Activated CD8-positive, alpha-beta T cell treated with anti-CD3 and anti-CD28 coated beads for 36 hours (primary cell): ENCODE measurements at regions of chr7 and their contacts with region 1.

Region 1: DNA sequence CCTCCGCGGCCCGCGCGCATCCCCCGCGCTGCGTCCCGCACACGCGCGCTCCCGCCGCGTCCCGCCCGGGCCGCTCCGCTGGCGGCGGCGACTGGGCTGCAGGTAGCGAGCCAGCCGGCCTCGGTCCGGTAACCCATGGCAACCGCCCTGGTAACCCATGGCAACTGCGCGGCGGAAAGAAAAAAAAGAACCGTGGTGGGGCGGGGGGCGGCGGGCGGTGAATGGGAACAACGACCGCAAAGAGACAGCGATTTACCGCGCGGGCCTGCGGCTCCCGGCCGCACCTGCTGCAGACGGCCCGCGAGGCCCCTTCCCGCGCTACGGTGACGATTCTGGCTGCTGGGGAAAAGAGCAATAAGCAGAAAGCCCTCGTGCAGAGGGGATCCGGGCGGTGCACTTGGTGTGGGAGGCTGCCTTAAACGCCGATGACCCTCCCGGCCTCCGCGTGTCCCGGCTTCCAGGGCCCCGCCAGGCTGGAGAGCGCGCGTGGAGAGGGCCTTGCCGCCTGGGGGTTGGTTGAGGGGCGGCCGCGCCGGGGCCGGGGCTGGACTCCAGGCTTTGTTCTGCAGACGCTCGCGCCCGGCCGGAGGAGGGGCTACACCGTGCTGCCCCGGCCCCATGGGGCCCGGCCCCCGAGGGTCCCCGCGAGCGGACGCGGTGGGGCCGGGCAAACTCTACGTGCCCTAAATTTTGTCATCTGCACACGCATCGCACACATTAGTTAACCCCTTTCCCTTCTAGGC is 84.7 kb downstream of the SNX10 start:
- DNase-seq: peak; percentile 65
- ATAC-seq: peak; percentile 8
- H3K4me3 Mint-ChIP-seq: peak overlapping the region; percentile 71
- H3K27ac Mint-ChIP-seq: no peak overlapping the region
- H3K4me1 Mint-ChIP-seq: peaks cover 6% of the 10 kb centered on the region
- H3K27me3 Mint-ChIP-seq: peaks cover 19% of the 10 kb centered on the region
- CTCF ChIP-seq: no peak

Region 2: DNA sequence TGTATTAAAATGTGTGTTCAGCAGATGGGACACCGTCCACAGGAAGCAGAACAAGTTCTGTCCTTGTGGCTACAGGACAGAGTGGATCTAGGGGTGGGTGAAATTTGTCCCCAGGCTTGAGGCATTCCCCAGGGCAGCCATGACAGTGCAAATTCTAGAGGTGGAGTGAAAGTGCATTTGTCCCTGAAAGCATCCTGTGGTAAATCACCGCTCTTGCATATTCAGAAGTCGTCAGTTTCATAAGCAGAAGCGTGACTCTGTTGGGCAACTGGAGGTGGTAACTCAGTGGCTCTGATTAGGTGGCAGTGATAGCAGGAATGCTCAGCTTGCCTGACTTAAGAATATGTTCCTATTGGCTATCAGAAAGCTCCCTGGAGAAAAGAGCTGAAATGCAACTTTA is 11.9 kb after region 1 on chr7:
- CTCF ChIA-PET with region 1: interaction called, 12 read pairs
- POLR2A ChIA-PET with region 1: interaction called, 3 read pairs
- intact Hi-C with region 1: no loop called
- DNase-seq: no peak
- ATAC-seq: peak; percentile 34
- H3K4me3 Mint-ChIP-seq: no peak overlapping the region
- H3K27ac Mint-ChIP-seq: no peak overlapping the region
- H3K4me1 Mint-ChIP-seq: no peaks in the 10 kb centered on the region
- H3K27me3 Mint-ChIP-seq: peaks cover 36% of the 10 kb centered on the region
- CTCF ChIP-seq: no peak

Region 3: DNA sequence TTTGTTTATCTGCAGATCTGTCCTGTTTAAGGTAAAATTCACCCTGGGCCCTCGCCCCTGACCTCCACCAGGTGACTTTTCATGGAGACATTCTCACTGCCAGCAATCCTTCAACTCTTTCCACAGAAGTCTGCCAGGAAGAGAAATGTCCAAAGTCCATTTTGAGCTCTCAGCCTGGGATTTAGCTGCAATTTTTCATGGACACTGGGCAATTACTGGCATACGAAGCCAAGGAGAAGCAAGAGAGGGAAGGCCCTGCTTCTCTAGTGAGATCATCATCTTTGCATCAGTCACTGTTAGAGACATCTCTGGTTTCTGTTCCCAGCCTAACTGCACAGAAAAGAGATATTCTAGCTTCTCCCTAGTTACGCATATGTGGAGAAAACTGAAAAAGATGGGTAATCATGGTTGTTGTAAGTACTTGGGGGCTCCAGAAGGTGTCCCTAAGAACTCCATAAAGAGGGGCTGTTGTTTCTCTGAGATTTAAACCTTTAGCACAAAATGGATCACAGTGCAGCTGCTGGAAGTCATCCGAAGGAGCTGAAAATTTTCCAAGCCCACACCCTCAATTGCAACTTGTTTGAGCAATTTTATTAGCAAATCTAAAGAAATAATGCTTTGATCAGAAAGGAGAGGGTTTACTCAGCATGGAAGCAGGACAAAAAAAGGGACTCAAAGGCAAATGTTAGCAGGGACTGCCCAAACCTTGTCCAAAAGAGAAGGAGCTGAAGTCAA is 84.2 kb after region 1 on chr7:
- CTCF ChIA-PET with region 1: no interaction called
- POLR2A ChIA-PET with region 1: no interaction called
- intact Hi-C with region 1: no loop called
- DNase-seq: no peak
- ATAC-seq: no peak
- H3K4me3 Mint-ChIP-seq: no peak overlapping the region
- H3K27ac Mint-ChIP-seq: no peak overlapping the region
- H3K4me1 Mint-ChIP-seq: no peaks in the 10 kb centered on the region
- H3K27me3 Mint-ChIP-seq: peaks cover 4% of the 10 kb centered on the region
- CTCF ChIP-seq: no peak

Region 4: DNA sequence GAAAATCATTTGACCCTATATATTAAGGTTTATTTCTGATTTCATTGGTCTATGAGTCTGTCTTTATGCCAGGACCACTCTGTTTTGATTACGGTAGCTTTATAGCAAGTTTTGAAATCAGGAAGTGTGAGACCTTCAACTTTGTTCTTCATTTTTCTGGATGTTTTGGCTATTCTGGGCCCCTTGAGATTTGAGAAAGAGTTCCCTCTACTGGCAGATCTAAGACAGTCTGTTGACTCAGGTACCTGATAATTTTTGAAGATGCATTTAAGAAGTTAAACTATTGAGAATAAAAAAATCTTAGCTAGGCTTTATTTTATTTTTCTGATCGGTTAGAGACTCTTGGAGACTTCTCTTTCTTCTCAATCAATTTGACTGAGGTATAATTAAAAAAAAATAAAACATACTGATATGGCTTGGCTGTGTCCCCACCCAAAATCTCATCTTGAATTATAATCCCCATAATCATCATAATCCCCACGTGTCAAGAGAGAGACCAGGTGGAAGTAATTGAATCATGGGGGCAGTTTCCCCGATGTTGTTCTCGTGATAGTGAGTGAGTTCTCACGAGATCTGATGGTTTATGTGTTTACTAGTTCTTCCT is 124.5 kb after region 1 on chr7:
- CTCF ChIA-PET with region 1: interaction called, 10 read pairs
- POLR2A ChIA-PET with region 1: no interaction called
- intact Hi-C with region 1: loop called (anchors 2 kb)
- DNase-seq: no peak
- ATAC-seq: peak; percentile 58
- H3K4me3 Mint-ChIP-seq: no peak overlapping the region
- H3K27ac Mint-ChIP-seq: no peak overlapping the region
- H3K4me1 Mint-ChIP-seq: no peaks in the 10 kb centered on the region
- H3K27me3 Mint-ChIP-seq: peaks cover 6% of the 10 kb centered on the region
- CTCF ChIP-seq: peak; percentile 50

Region 5: DNA sequence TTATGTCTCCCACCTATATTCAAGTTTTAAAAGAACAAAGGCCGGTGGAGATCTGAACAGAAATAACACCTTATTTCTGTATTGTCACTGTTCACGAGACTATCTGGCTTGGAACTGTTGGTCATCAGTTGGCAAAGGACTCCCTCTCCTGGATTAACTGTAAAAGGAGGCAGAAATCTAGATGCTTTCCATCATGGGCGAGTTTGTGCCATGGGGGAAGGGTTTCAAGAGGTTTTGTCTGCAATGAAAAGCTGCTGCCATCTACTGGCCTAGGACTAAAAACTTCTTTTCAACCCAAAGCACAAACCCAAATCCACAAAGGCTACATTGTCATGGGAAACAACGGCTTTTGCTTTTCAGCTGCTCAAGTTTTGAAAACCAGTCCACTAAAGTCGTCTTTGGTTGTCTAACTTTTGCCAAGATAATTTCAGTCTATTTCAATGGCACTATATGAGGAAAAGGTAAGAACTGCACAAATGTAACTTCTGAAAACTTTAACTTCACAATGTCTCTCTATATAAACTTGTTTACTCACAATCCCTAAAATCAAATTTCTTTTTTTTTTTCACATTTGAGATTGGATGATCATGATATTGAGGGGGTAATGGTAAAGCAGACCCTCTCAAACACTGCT is 291.3 kb after region 1 on chr7:
- CTCF ChIA-PET with region 1: interaction called, 17 read pairs
- POLR2A ChIA-PET with region 1: no interaction called
- intact Hi-C with region 1: loop called (anchors 5 kb)
- DNase-seq: peak; percentile 63
- ATAC-seq: peak; percentile 82
- H3K4me3 Mint-ChIP-seq: no peak overlapping the region
- H3K27ac Mint-ChIP-seq: no peak overlapping the region
- H3K4me1 Mint-ChIP-seq: peaks cover 16% of the 10 kb centered on the region
- H3K27me3 Mint-ChIP-seq: peaks cover 3% of the 10 kb centered on the region
- CTCF ChIP-seq: peak; percentile 72